Heart left ventricle (tissue), 16 donors: ENCODE measurements at regions of chr4 and their contacts with region 1.

Region 1: DNA sequence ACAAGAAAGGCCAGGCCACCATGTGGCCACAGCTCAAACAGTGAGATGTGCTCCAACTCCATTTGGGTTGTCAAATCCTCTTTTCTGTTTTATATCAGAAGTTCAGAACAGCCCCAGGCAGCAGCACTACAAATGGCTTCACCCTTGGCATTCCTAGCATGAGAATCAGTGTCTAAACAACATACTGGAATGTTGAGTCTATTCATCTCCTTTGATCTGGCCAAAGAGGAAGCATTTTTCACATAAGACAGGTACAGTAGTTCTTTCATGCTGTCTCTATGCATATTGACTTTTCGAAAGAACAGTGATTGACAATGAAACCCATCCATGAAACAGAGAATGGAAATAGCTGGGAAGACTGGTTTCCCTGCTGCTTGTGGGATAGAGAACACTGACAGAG is 289.5 kb downstream of the USP46 start:
- DNase-seq: no peak
- ATAC-seq: no peak
- H3K4me3 ChIP-seq: no peak overlapping the region
- H3K27ac ChIP-seq: no peak overlapping the region
- H3K4me1 ChIP-seq: peaks cover 0 to 5% (median 0%) of the 10 kb centered on the region in 12 donors
- H3K27me3 ChIP-seq: no peaks in the 10 kb centered on the region
- CTCF ChIP-seq: no peak
- POLR2A ChIP-seq: no peak

Region 2: DNA sequence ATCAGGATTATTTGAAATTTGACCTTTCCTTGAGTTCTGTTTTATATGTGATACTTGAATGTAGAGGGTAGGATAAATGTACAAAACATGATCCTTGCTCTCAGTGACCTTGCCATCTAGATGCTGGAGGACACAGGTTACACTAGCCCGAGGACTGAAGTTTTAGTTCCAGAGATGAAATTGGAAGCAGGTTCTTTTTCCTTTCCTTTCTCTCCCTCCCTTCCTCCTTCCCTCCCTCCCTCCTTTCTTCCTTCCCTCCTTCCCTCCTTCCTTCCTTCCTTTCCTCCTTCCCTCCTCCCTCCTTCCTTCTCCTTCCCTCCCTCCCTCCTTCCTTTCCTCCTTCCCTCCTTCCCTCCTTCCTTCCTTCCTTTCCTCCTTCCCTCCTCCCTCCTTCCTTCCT is 403.8 kb before region 1 on chr4:
- intact Hi-C with region 1: no loop called
- DNase-seq: no peak
- ATAC-seq: no peak
- H3K4me3 ChIP-seq: no peak overlapping the region
- H3K27ac ChIP-seq: no peak overlapping the region
- H3K4me1 ChIP-seq: peaks cover 0 to 2% (median 0%) of the 10 kb centered on the region in 12 donors
- H3K27me3 ChIP-seq: no peaks in the 10 kb centered on the region
- CTCF ChIP-seq: no peak
- POLR2A ChIP-seq: no peak

Region 3: DNA sequence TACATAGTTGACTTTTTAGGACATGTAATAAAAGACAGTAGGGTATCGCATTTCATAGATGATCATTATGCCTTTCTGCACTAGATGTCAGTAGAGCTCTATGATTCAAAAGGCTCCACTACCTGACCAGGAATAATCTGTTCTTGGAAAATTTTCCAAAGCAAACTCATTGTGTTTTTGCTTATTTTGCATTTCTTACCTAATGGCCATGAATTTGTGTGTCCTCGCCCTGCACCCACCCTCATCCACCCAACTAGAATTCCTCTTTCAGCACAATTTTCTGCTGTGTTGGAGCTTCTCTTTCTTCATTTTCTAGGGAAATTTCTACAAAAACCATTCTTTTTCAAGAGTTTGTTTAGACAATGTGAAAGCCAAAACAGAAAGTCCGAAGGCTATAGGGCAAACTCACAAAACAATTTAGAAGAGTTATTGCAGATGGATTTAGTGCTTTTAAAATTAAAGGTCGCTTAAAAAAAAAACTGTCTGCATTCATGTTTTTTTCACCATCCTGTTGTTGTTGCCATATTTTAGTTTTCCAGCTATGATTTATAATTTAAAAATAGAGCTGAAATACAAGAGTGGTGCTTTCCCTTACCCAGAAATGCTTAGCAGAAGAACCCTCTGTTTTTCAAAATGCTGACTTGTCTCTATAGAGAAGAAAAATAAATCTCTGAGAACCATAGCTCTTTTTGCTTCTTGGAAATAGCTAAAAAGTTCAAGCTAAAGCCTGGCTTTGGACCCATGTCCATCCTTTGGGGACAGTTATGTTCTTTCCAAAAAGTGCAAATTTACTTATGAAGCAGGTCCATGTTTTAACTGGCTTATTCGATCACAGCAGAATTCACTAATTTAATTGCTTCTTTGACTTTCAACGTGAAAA is 134.8 kb before region 1 on chr4:
- intact Hi-C with region 1: loop called in 3 of 10 experiments (anchors 5 to 10 kb)
- DNase-seq: no peak
- ATAC-seq: peak; percentile 73 to 86 (median 78)
- H3K4me3 ChIP-seq: peak overlapping the region in 2 of 12 donors; percentile 2 to 6
- H3K27ac ChIP-seq: no peak overlapping the region
- H3K4me1 ChIP-seq: peaks cover 0 to 5% (median 0%) of the 10 kb centered on the region in 12 donors
- H3K27me3 ChIP-seq: peaks cover 0 to 3% (median 0%) of the 10 kb centered on the region in 9 donors
- CTCF ChIP-seq: peak in 11 of 12 donors; percentile 37 to 77 (median 64)
- POLR2A ChIP-seq: no peak

Region 4: GRCh38 chr4:52244848-52245247 is 124.8 kb before region 1 on chr4:
- intact Hi-C with region 1: loop called in 1 of 10 experiments (anchors 10 kb)
- DNase-seq: no peak
- ATAC-seq: peak in 3 of 4 donors; percentile 66 to 75 (median 73)
- H3K4me3 ChIP-seq: no peak overlapping the region
- H3K27ac ChIP-seq: no peak overlapping the region
- H3K4me1 ChIP-seq: peaks cover 0 to 45% (median 14%) of the 10 kb centered on the region in 12 donors
- H3K27me3 ChIP-seq: no peaks in the 10 kb centered on the region
- CTCF ChIP-seq: no peak
- POLR2A ChIP-seq: no peak

Region 5: DNA sequence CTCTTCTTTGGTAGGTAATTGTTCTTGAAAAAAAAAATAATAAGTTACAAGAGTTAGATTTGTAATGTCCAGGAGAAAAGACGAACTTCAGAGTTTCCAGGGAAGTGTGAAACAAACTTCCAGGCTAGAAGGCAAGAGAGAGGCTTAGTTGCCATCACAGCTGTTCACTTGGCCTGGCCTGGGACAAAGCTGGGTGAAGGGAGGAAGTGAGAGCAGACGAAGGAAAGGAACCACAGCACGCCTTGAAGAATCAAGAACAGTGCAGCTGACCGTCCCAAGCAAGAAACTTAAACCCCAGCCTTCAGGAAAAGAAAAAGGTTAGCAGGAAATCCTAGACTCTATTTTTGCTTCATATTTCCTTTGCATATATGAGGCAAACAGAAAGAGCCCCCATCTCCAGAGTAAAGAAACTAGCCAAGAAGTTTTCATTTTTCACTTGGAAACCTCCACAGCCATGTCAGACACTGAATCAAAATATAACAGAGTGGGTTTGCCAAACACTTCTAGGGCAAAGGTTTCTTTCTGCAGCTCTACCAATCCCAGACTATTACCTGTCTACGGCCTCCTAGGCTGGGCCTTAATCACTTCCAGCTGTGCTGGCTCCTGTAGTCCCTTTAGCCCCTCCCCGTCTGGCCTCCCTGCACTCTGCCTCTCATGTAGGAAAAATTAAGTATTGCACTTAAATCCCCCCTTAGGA is 109.0 kb before region 1 on chr4:
- intact Hi-C with region 1: loop called in 1 of 10 experiments (anchors 10 kb)
- DNase-seq: peak in 4 of 5 donors; percentile 28 to 51 (median 40)
- ATAC-seq: peak; percentile 74 to 87 (median 76)
- H3K4me3 ChIP-seq: no peak overlapping the region
- H3K27ac ChIP-seq: peak overlapping the region in 6 of 12 donors; percentile 27 to 61 (median 46)
- H3K4me1 ChIP-seq: peaks cover 0 to 23% (median 3%) of the 10 kb centered on the region in 12 donors
- H3K27me3 ChIP-seq: no peaks in the 10 kb centered on the region
- CTCF ChIP-seq: no peak
- POLR2A ChIP-seq: no peak